Activated CD4-positive, alpha-beta memory T cell treated with anti-CD3 and anti-CD28 coated beads for 36 hours (primary cell): ENCODE measurements at regions of chr16 and their contacts with region 1.

Region 1: GRCh38 chr16:69465083-69465721 is 40.8 kb downstream of the CYB5B start:
- DNase-seq: peak; percentile 26
- H3K4me3 Mint-ChIP-seq: peak overlapping the region; percentile 3
- H3K27ac Mint-ChIP-seq: peak overlapping the region; percentile 44
- H3K4me1 Mint-ChIP-seq: peaks cover 51% of the 10 kb centered on the region
- H3K27me3 Mint-ChIP-seq: no peaks in the 10 kb centered on the region

Region 2: GRCh38 chr16:69443927-69444631 is 21.1 kb before region 1 on chr16:
- CTCF ChIA-PET with region 1: no interaction called
- POLR2A ChIA-PET with region 1: interaction called, 3 read pairs
- intact Hi-C with region 1: loop called (anchors 2 kb)
- DNase-seq: peak; percentile 41
- H3K4me3 Mint-ChIP-seq: peak overlapping the region; percentile 62
- H3K27ac Mint-ChIP-seq: peak overlapping the region; percentile 88
- H3K4me1 Mint-ChIP-seq: peaks cover 39% of the 10 kb centered on the region
- H3K27me3 Mint-ChIP-seq: no peaks in the 10 kb centered on the region

Region 3: DNA sequence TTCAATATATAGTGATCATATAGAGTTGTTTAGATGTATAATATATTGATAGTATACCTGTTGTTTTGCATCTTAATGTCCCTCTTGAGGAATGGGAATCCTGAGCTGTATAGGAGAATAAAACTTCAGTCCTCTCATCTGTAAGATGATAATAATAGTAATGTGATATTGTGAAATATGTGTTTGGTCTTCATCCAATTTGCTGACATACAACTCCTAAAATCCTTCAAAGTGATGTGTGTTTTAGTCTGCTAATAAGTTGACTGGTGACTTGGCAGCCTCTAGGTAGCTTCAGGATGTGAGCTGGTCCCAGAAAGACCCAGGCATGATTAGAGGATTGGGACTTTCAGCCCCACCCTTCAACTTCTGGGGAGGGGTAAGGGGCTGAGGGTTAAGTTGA is 77.8 kb after region 1 on chr16:
- CTCF ChIA-PET with region 1: no interaction called
- POLR2A ChIA-PET with region 1: no interaction called
- intact Hi-C with region 1: no loop called
- DNase-seq: no peak
- H3K4me3 Mint-ChIP-seq: no peak overlapping the region
- H3K27ac Mint-ChIP-seq: no peak overlapping the region
- H3K4me1 Mint-ChIP-seq: no peaks in the 10 kb centered on the region
- H3K27me3 Mint-ChIP-seq: no peaks in the 10 kb centered on the region